ENCODE measurements at regions of chr16 and their contacts with region 1.

Region 1: DNA sequence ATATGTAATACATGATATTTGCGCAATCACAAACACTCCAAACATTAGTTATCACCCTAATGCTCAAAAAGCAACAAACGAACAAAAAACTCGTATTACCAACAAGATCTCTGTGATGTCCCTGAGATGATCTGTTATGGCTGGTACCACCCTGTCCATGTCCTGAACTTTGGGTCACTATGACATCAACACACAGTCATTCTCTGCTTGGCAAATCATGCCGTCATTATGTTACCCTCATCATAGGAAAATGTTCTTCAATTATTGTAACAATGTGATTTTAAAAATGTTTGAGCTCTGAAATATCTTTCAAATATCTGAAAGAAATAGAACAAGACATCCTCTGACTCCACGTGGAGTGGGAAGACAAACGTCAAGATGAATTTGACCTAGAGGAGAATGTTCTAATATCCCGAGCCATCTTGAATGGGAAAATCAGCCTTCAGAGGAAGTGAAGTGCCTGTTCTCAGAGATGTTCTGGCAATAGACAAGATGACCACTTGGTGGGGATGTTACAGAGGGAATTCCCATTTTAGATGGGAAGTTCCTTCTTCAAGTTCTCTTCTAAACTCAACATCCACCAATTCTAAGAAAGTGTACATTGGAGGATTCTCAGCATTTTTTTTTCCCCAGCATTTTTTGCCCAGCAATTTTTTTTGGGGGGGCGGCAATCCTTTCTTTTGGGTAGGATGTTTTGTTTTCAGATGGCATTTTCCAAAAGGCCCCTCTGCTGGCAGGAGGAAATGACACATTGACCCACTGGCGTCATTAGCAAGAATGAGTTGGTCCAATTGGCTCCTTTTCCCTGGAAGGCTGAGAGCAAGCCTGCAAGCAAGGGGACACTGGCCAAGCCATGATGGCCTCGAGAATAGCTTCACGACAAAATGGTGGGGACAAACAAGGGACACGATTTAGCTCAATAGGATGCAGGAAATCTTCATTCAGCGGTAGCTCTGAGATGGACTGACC is 3.7 kb upstream of the HSD17B2 start:
- DNase-seq: no peak
- ATAC-seq: no peak

Region 2: GRCh38 chr16:82229796-82230619 is 198.6 kb after region 1 on chr16:
- intact Hi-C with region 1: loop called in 1 of 2 experiments (anchors 5 kb)
- DNase-seq: peak; percentile 70 to 79
- ATAC-seq: peak; percentile 90

Measured in left colon (tissue), 2 donors.